ENCODE measurements at regions of chr5 and their contacts with region 1.

Region 1: DNA sequence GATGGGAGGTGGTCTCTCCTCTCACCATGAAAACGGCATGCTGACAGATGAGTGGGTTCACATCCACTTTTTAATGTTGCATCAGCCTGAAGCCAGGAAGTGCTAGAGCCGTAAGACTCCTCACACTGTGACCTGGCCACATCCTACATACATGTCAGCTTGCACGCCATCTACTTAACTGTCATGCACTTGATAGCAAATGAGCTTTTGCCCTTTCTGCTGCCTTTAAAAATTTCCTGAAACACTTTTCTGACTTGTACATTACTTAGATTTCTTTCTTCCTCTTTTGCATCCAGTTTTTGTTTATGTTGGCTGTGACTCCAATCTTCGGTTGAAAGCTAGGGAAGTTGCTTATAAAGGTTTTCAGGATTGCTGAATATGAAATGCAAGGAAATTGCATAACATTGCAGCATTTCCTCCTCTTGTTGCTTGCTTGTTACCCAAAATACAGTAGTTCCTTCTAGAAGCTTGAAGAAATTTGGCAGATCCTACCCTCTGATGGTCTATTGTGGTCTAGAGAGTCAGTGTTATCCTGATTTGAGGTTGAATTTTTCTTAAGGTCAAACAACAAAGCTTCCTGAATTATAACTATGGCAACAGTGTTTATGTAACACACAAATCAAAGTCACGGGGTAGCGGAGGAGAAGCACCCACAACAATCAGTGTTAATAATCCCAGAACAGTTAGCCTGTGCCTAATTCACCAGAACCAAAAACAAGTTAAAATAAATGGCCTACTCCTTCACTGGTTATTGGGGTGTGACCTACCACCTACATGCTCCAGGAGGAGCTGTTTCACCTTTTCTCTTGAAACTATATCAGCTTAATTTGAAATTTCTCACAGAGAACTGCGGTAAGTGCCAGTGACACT is 232.5 kb downstream of the ARHGAP26 start:
- DNase-seq: no peak
- H3K4me3 ChIP-seq: no peak overlapping the region
- H3K27ac ChIP-seq: peak overlapping the region in 1 of 2 donors; percentile 36
- H3K4me1 ChIP-seq: peaks cover 7% of the 10 kb centered on the region
- H3K27me3 ChIP-seq: no peaks in the 10 kb centered on the region
- CTCF ChIP-seq: peak in 2 of 3 donors; percentile 42 to 45
- EP300 ChIP-seq: no peak
- POLR2A ChIP-seq: no peak

Region 2: GRCh38 chr5:142860270-142860669 is 142.4 kb before region 1 on chr5:
- intact Hi-C with region 1: no loop called
- DNase-seq: no peak
- H3K4me3 ChIP-seq: no peak overlapping the region
- H3K27ac ChIP-seq: no peak overlapping the region
- H3K4me1 ChIP-seq: no peaks in the 10 kb centered on the region
- H3K27me3 ChIP-seq: no peaks in the 10 kb centered on the region
- CTCF ChIP-seq: no peak
- EP300 ChIP-seq: no peak
- POLR2A ChIP-seq: no peak

Region 3: GRCh38 chr5:142981886-142982820 is 20.5 kb before region 1 on chr5:
- intact Hi-C with region 1: loop called in 1 of 4 experiments (anchors 1 kb)
- DNase-seq: peak; percentile 68 to 84 (median 71)
- H3K4me3 ChIP-seq: no peak overlapping the region
- H3K27ac ChIP-seq: peak overlapping the region in 1 of 2 donors; percentile 32
- H3K4me1 ChIP-seq: peaks cover 11% of the 10 kb centered on the region
- H3K27me3 ChIP-seq: no peaks in the 10 kb centered on the region
- CTCF ChIP-seq: no peak
- EP300 ChIP-seq: no peak
- POLR2A ChIP-seq: no peak